Naive thymus-derived CD8-positive, alpha-beta T cell (primary cell): ENCODE measurements at regions of chr13 and their contacts with region 1.

Region 1: GRCh38 chr13:110915057-110915873 is at the start of gene ANKRD10:
- DNase-seq: peak; percentile 82 to 98 (median 90)
- ATAC-seq: peak; percentile 71 to 74
- H3K4me3 Mint-ChIP-seq: peak within 1 kb of the TSS; percentile 86 to 96 (median 92)
- H3K27ac Mint-ChIP-seq: peak within 1 kb of the TSS; percentile 73 to 96 (median 93)
- H3K4me1 Mint-ChIP-seq: peaks cover 7 to 54% (median 47%) of the 10 kb centered on the region in 4 donors
- H3K27me3 Mint-ChIP-seq: peaks cover 0 to 1% (median 0%) of the 10 kb centered on the region in 5 donors
- polyA plus RNA-seq, gene ANKRD10: 56.1 to 65.3 (median 60.3) TPM

Region 2: DNA sequence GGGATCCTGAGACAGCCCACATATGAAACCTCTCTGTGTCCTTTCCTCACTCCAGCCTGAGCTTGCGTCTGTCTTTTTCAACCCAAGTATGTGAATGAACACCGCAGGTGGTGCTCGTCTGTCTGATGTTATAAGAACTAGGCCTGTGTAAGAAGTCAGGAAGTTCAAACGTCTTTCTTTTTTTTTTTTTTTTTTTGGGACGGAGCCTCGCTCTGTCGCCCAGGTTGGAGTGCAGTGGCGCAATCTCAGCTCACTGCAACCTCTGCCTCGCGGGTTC is 92.7 kb before region 1 on chr13:
- POLR2A ChIA-PET with region 1: interaction called, 14 read pairs
- DNase-seq: peak in 3 of 10 donors; percentile 28 to 38 (median 29)
- ATAC-seq: peak; percentile 77 to 83
- H3K4me3 Mint-ChIP-seq: peak overlapping the region; percentile 82 to 95 (median 91)
- H3K27ac Mint-ChIP-seq: peak overlapping the region; percentile 68 to 95 (median 91)
- H3K4me1 Mint-ChIP-seq: peaks cover 0 to 18% (median 11%) of the 10 kb centered on the region in 4 donors
- H3K27me3 Mint-ChIP-seq: no peaks in the 10 kb centered on the region

Region 3: DNA sequence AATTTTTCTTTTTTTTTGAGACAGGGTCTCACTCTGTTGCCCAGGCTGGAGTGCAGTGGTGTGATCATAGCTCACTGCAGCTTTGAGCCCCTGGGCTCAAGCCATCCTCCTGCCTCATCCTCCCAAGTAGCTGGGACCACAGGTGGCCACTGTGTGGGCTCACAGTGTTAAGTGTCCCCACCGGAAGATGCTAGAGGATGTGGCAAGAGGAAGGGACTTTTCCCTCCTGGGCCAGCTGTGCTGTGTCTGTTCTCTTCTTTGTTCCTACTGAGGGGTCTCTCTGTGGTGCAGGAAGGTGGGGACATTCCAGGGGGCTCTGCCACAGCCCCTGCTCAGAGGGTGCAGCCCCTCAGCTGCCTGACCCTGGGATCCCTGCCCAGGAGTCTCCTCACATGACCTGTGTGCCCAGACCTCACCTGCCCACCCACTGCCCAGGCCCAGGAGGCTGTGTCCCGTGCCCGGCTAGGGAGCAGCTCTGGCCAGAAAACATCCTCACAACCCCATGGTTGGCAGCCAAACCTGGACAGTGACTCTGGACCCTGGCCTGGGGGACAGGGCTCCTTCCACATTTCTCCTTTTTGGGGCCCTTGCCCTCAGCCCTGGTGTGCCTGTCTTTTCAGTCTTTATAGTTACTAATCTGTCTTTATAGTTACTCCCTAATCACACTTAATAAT is 14.0 kb after region 1 on chr13:
- POLR2A ChIA-PET with region 1: no interaction called
- DNase-seq: no peak
- ATAC-seq: no peak
- H3K4me3 Mint-ChIP-seq: no peak overlapping the region
- H3K27ac Mint-ChIP-seq: no peak overlapping the region
- H3K4me1 Mint-ChIP-seq: no peaks in the 10 kb centered on the region
- H3K27me3 Mint-ChIP-seq: peaks cover 27 to 69% (median 53%) of the 10 kb centered on the region in 5 donors